Left colon (tissue), 2 donors: ENCODE measurements at regions of chr12 and their contacts with region 1.

Region 1: GRCh38 chr12:108950991-108951739 is 69.7 kb downstream of the SVOP start:
- DNase-seq: peak; percentile 51 to 78
- ATAC-seq: peak; percentile 91

Region 2: GRCh38 chr12:108861878-108862587 is 89.1 kb before region 1 on chr12:
- intact Hi-C with region 1: loop called in 1 of 2 experiments (anchors 10 kb)
- DNase-seq: peak in 1 of 2 donors; percentile 53
- ATAC-seq: peak; percentile 48

Region 3: DNA sequence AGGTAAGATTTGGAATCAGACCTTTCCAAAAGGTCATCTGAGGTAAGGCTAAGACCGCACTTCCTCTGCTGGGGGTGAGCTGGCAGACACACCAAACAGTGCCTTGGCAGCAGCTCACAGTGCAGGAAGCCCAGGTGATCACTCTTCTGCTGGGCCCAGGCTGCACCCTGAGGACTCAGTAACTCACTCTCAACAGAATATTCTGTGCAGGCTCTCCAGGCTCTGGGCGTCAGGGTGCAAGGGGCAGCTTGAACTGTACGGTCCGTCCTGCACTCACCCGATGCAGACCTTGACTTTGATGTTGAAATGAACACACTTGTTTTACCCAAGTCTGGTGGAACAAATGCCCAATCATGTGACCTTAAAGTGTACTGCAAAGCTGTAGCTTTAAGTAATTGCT is 136.1 kb after region 1 on chr12:
- intact Hi-C with region 1: loop called in 1 of 2 experiments (anchors 10 kb)
- DNase-seq: no peak
- ATAC-seq: peak; percentile 57